Activated CD4-positive, alpha-beta memory T cell treated with anti-CD3 and anti-CD28 coated beads for 36 hours (primary cell): ENCODE measurements at regions of chr7 and their contacts with region 1.

Region 1: DNA sequence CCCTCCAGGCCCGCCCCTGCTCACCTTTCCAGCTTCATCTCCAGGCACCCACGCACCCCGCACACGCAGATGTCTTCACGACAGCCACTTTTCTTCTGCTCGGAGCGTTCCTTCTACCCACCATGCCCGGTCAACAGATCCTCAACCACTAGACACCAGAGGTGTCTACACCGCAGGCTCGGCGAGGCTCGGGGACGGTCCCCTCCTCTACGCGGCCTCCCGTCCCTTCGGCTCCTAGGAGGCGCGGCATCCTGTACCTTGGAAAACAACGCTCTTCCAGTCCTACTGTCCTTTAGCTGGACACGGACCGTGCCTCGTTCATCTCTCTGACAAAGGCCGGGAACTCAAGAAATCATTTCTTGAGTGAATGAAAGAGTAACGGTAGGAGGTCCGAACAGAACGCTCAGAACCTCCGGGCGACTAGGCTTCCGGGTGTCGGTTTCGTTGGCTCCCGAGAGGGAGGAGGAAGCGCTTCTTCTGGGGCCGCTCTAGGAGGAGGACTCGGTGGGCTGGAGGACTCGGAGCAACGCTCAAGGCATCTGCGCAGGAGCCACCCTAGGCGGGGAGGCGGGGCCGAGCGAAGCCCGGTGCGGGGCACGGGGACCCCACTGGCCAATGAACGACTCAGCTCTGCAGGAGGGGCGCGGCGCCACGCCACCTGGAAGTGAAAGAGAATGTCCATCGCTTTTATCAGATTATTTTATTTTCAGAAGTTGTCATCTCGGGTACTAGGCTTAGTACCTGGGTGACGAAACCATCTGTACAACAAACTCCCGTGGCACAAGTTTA is 7.2 kb upstream of the FIS1 start:
- DNase-seq: peak; percentile 99
- H3K4me3 Mint-ChIP-seq: peak overlapping the region; percentile 95
- H3K27ac Mint-ChIP-seq: peak overlapping the region; percentile 92
- H3K4me1 Mint-ChIP-seq: peaks cover 20% of the 10 kb centered on the region
- H3K27me3 Mint-ChIP-seq: peaks cover 3% of the 10 kb centered on the region

Region 2: DNA sequence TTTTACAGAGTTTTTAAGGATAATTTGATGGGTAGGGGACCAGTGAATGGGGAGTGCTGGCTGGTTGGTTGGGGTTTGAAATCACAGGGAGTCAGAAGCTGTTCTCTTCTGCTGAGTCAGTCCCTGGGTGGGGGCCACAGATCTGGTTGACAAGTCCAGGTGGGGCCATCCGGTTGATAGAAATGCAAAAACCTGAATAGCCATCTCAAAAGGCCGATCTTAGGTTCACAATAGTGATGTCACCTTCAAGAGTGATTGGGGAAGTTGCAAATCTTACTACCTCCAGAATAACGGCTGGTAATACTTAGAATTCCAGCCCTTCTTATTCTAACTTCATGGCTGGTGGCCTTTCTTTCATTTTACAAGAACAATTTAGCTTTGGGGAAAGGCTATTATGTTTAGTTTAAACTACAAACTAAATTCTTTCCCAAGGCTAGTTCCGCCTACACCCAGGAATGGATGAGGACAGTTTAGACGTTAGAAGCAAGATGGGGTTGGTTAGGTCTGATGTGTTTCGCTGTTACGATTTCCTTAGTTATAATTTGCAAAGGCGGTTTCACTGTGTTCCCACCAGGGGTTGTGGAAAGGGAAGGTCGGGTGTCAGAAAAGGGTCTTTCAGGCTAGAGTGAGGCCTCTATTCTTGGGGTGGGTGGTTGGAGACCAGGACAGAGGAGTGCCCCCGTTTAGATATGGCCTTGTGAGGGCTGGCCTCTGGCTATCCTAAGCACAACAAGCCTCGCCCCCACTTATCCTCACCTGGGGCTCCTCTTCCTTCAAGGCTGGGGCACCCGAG is 42.2 kb after region 1 on chr7:
- CTCF ChIA-PET with region 1: interaction called, 3 read pairs
- POLR2A ChIA-PET with region 1: no interaction called
- intact Hi-C with region 1: loop called (anchors 5 kb)
- DNase-seq: no peak
- H3K4me3 Mint-ChIP-seq: no peak overlapping the region
- H3K27ac Mint-ChIP-seq: no peak overlapping the region
- H3K4me1 Mint-ChIP-seq: peaks cover 14% of the 10 kb centered on the region
- H3K27me3 Mint-ChIP-seq: peaks cover 36% of the 10 kb centered on the region